ENCODE measurements at regions of chr12 and their contacts with region 1.

Region 1: GRCh38 chr12:6825398-6826124 is 2.6 kb upstream of the P3H3 start:
- DNase-seq: peak; percentile 92
- H3K4me3 Mint-ChIP-seq: no peak overlapping the region
- H3K27ac Mint-ChIP-seq: no peak overlapping the region
- H3K4me1 Mint-ChIP-seq: peaks cover 28% of the 10 kb centered on the region
- H3K27me3 Mint-ChIP-seq: peaks cover 19% of the 10 kb centered on the region

Region 2: GRCh38 chr12:6563448-6564050 is 262.0 kb before region 1 on chr12:
- CTCF ChIA-PET with region 1: no interaction called
- intact Hi-C with region 1: loop called (anchors 5 kb)
- DNase-seq: peak; percentile 79
- H3K4me3 Mint-ChIP-seq: no peak overlapping the region
- H3K27ac Mint-ChIP-seq: peak overlapping the region; percentile 36
- H3K4me1 Mint-ChIP-seq: peaks cover 39% of the 10 kb centered on the region
- H3K27me3 Mint-ChIP-seq: no peaks in the 10 kb centered on the region

Region 3: GRCh38 chr12:6632026-6632983 is 193.3 kb before region 1 on chr12:
- CTCF ChIA-PET with region 1: interaction called, 10 read pairs
- intact Hi-C with region 1: no loop called
- DNase-seq: peak; percentile 77
- H3K4me3 Mint-ChIP-seq: peak overlapping the region; percentile 74
- H3K27ac Mint-ChIP-seq: peak overlapping the region; percentile 97
- H3K4me1 Mint-ChIP-seq: peaks cover 62% of the 10 kb centered on the region
- H3K27me3 Mint-ChIP-seq: no peaks in the 10 kb centered on the region

Region 4: GRCh38 chr12:6766651-6767349 is 58.8 kb before region 1 on chr12:
- CTCF ChIA-PET with region 1: interaction called, 15 read pairs
- intact Hi-C with region 1: loop called (anchors 5 kb)
- DNase-seq: peak; percentile 57
- H3K4me3 Mint-ChIP-seq: peak overlapping the region; percentile 85
- H3K27ac Mint-ChIP-seq: peak overlapping the region; percentile 52
- H3K4me1 Mint-ChIP-seq: peaks cover 38% of the 10 kb centered on the region
- H3K27me3 Mint-ChIP-seq: peaks cover 34% of the 10 kb centered on the region

Region 5: DNA sequence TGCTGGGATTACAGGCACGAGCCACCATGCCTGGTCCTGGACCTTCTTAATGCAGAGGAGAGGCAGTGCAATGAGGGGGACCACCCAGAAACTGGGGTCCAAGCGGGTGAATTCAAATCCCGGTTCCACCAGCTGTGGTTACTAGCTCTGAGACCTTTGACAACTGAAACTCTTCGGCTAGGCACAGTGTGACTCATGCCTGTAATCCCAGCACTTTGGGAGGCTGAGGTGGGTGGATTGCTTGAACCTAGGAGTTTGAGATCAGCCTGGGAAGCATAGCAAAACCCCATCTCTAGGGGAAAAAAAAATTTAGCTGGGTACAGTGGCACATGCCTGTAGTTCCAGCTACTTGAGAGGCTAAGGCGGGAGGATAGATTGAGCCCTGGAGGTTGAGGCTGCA is 41.3 kb before region 1 on chr12:
- CTCF ChIA-PET with region 1: interaction called, 33 read pairs
- intact Hi-C with region 1: loop called (anchors 1 kb)
- DNase-seq: no peak
- H3K4me3 Mint-ChIP-seq: no peak overlapping the region
- H3K27ac Mint-ChIP-seq: no peak overlapping the region
- H3K4me1 Mint-ChIP-seq: peaks cover 86% of the 10 kb centered on the region
- H3K27me3 Mint-ChIP-seq: no peaks in the 10 kb centered on the region

Region 6: DNA sequence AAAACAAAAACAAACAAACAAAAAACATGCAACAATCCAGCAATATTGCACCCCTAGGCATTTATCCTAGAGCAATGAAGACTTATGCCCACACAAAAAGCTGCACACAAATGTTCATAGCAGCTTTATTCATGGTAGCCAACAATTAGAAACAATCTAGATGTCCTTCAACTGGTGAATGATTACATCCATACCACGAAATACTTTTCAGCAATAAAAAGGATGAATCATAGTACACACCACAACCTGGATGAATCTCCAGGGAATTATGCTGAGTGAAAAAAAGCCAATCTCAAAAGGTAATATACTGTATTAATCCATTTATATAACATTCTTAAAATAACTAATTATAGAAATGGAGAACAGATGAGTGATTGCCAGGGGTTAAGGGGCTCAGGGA is 18.4 kb before region 1 on chr12:
- CTCF ChIA-PET with region 1: interaction called, 18 read pairs
- intact Hi-C with region 1: no loop called
- DNase-seq: no peak
- H3K4me3 Mint-ChIP-seq: no peak overlapping the region
- H3K27ac Mint-ChIP-seq: no peak overlapping the region
- H3K4me1 Mint-ChIP-seq: peaks cover 19% of the 10 kb centered on the region
- H3K27me3 Mint-ChIP-seq: no peaks in the 10 kb centered on the region

Measured in activated naive CD4-positive, alpha-beta T cell treated with anti-CD3 and anti-CD28 coated beads for 36 hours (primary cell).